Activated T-helper 2 cell treated with anti-CD3 and anti-CD28 coated beads, Interferon-gamma antibody, Interleukin-2, Interleukin-4, amounts not matched to agents 10 μg/mL and 5 μg/mL and 100 μg/mL, durations not matched to agents 14 hours and 24 hours and 36 hours (primary cell): ENCODE measurements at regions of chr9 and their contacts with region 1.

Region 1: GRCh38 chr9:89310475-89311346 is at the start of gene CKS2:
- DNase-seq: peak; percentile 100
- H3K4me3 Mint-ChIP-seq: peak within 1 kb of the TSS; percentile 97
- H3K27ac Mint-ChIP-seq: peak within 1 kb of the TSS; percentile 100
- H3K4me1 Mint-ChIP-seq: peaks cover 41% of the 10 kb centered on the region
- H3K27me3 Mint-ChIP-seq: no peaks in the 10 kb centered on the region
- total RNA-seq, gene CKS2: 172 and 177 TPM in 2 replicates

Region 2: GRCh38 chr9:89379508-89380115 is 68.9 kb after region 1 on chr9:
- intact Hi-C with region 1: no loop called
- DNase-seq: no peak
- H3K4me3 Mint-ChIP-seq: no peak overlapping the region
- H3K27ac Mint-ChIP-seq: peak overlapping the region; percentile 71
- H3K4me1 Mint-ChIP-seq: peaks cover 73% of the 10 kb centered on the region
- H3K27me3 Mint-ChIP-seq: no peaks in the 10 kb centered on the region

Region 3: DNA sequence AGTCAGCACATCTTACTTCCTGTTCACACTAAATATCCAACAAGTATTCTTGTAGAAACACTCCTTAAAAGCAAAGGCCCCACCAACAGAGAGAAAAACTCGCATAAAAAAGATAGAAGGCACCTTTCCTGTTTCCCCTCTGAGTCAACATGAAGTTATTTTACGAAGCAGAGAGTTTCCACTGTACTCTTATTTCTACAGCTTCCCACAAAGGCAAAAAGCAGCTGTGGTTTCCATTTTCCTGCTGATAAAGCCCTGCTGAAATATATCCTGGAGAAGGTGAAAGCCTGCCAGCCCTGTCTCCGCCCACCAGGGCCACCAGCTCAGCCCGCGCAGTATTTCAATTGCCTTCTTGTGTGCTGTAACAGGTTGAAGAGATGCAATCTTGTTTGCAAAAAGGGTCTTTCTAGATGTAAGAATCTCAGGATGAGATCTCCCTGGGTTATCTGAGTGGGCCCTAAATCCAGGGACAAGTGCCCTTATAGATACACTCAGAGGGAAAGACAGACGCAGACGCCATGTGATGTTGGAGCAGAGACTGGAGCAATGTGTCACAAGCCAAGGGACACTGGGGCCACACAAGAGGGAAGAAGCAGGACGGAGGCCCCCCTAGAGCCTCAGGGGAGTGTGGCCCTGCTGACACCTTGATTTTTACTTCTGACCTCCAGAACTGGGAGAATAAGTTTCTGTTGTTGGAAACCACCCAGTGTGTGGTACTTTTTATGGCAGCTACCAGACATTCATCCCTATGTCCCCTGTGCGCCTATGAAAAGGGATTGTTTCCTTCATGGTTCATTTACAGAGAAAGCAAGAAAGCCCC is 167.3 kb after region 1 on chr9:
- intact Hi-C with region 1: loop called (anchors 5 kb)
- DNase-seq: peak; percentile 65
- H3K4me3 Mint-ChIP-seq: peak overlapping the region; percentile 83
- H3K27ac Mint-ChIP-seq: peak overlapping the region; percentile 97
- H3K4me1 Mint-ChIP-seq: peaks cover 78% of the 10 kb centered on the region
- H3K27me3 Mint-ChIP-seq: no peaks in the 10 kb centered on the region